Activated B cell treated with CpG ODN at 0.5 μM for 24 hours (primary cell): ENCODE measurements at regions of chr2 and their contacts with region 1.

Region 1: DNA sequence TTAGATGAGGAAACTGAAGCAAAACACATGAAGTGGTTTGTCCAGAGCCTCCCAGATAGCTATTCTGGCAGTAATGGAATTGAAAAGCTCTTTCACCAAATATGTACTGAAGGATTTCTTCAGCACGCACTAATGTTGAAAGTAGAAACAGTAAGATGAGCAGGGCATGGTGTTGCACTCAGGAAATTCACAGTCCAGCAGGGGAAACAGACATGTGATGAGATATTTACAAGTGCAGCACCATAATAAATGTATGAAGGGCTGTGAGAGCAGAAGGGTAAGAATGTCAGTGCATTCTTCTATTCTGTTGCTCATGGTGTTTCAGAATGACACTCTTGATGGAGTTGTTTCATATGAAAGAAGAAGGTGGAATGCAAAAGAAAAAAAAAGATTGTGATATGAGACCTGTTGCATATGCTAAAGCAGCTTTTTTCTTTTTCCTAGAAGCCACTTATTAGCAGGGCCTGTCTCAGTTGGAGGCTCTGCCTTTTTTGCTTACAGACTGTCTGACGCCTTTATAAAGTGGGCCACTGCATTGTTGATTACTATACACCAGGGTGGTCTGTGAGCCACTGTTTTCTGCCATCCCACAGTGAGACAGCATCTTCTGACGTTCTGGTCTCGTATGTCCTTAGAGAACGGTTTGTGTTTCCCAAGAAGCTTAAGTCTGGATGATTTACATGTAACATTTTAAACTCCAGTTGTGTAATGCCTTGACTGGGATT is 516.9 kb downstream of the ARHGAP15 start:
- DNase-seq: no peak
- ATAC-seq: no peak
- H3K4me3 Mint-ChIP-seq: no peak overlapping the region
- H3K27ac Mint-ChIP-seq: no peak overlapping the region
- H3K4me1 Mint-ChIP-seq: no peaks in the 10 kb centered on the region
- H3K27me3 Mint-ChIP-seq: no peaks in the 10 kb centered on the region
- CTCF ChIP-seq: no peak

Region 2: DNA sequence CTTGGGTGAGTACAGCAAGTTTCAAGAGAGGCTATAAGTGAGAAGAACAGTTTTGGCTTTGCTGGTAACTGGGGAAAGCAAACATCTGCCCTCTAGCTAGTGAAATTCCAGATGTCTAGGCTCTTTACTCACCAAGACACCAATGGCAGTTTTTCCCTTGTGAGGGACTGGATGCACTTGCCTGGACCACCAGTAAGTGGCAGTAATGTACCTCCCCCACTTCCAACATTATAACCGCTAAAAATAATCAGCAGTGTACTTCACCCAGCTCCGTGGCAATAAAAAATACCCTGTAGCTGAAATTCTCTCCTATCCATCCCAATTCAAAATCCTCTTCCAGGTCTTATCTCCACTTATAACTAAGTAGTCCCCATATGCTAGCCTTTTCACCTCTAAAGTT is 133.0 kb before region 1 on chr2:
- CTCF ChIA-PET with region 1: no interaction called
- POLR2A ChIA-PET with region 1: no interaction called
- intact Hi-C with region 1: no loop called
- DNase-seq: no peak
- ATAC-seq: no peak
- H3K4me3 Mint-ChIP-seq: no peak overlapping the region
- H3K27ac Mint-ChIP-seq: no peak overlapping the region
- H3K4me1 Mint-ChIP-seq: no peaks in the 10 kb centered on the region
- H3K27me3 Mint-ChIP-seq: no peaks in the 10 kb centered on the region
- CTCF ChIP-seq: no peak

Region 3: GRCh38 chr2:143668234-143668633 is 22.2 kb after region 1 on chr2:
- CTCF ChIA-PET with region 1: no interaction called
- POLR2A ChIA-PET with region 1: no interaction called
- intact Hi-C with region 1: no loop called
- DNase-seq: no peak
- ATAC-seq: no peak
- H3K4me3 Mint-ChIP-seq: no peak overlapping the region
- H3K27ac Mint-ChIP-seq: no peak overlapping the region
- H3K4me1 Mint-ChIP-seq: no peaks in the 10 kb centered on the region
- H3K27me3 Mint-ChIP-seq: no peaks in the 10 kb centered on the region
- CTCF ChIP-seq: no peak

Region 4: DNA sequence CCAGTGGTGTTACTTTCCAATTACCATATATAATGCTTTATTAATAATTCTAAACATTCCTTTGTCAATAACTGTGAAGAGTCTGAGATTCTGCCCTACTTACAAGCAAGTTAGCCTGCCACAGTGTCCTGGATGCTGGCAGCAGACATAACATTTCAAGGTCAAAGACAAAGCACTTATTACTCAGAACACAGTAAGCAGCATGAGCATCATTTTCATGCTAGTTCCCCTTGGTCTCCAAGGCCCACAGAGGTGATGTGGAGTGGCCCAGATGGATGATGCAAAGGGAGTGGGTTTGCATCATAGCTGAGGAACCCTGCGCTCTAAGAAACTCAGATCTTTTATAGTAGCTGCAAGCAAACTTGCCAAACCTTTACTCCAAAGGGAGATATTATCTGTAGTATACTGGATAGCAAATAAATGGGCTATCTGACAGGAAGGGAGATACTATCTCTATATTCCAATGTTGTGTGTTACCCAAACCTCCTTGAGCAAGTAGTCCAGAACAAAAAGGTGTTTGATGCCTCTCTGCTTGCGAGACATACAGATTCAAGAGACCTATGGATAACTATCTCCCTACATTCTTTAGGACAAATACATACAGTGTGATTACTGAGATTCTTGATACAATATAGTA is 524.2 kb after region 1 on chr2:
- CTCF ChIA-PET with region 1: no interaction called
- POLR2A ChIA-PET with region 1: interaction called, 11 read pairs
- intact Hi-C with region 1: no loop called
- DNase-seq: no peak
- ATAC-seq: no peak
- H3K4me3 Mint-ChIP-seq: no peak overlapping the region
- H3K27ac Mint-ChIP-seq: no peak overlapping the region
- H3K4me1 Mint-ChIP-seq: no peaks in the 10 kb centered on the region
- H3K27me3 Mint-ChIP-seq: no peaks in the 10 kb centered on the region
- CTCF ChIP-seq: no peak